Activated naive CD4-positive, alpha-beta T cell treated with anti-CD3 and anti-CD28 coated beads for 36 hours (primary cell): ENCODE measurements at regions of chr10 and their contacts with region 1.

Region 1: GRCh38 chr10:91006001-91006751 is 85.3 kb upstream of the ANKRD1 start:
- DNase-seq: peak; percentile 83
- H3K4me3 Mint-ChIP-seq: no peak overlapping the region
- H3K27ac Mint-ChIP-seq: no peak overlapping the region
- H3K4me1 Mint-ChIP-seq: peaks cover 31% of the 10 kb centered on the region
- H3K27me3 Mint-ChIP-seq: no peaks in the 10 kb centered on the region

Region 2: DNA sequence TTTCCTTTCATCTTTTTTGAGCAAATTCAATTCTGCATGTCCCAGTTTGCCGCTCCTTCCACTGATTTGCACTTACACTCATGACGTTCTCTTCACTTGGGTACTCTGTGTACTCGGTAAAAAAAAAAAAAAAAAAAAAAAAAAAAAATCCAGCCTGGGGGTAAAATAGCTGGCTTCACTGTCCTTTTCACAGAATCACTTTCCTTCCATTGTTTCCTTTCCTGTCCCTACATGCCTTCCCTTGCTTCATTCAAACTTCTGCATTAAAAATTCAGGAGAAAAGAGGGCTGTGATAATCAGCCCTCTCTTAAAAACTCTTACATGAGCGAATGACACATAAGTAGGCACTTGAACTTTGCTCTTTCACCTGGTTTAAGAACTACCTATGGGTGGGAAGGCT is 94.0 kb before region 1 on chr10:
- CTCF ChIA-PET with region 1: interaction called, 24 read pairs
- intact Hi-C with region 1: loop called (anchors 2 kb)
- DNase-seq: no peak
- H3K4me3 Mint-ChIP-seq: no peak overlapping the region
- H3K27ac Mint-ChIP-seq: no peak overlapping the region
- H3K4me1 Mint-ChIP-seq: peaks cover 2% of the 10 kb centered on the region
- H3K27me3 Mint-ChIP-seq: no peaks in the 10 kb centered on the region

Region 3: GRCh38 chr10:91024541-91024940 is 18.4 kb after region 1 on chr10:
- CTCF ChIA-PET with region 1: no interaction called
- intact Hi-C with region 1: no loop called
- DNase-seq: no peak
- H3K4me3 Mint-ChIP-seq: no peak overlapping the region
- H3K27ac Mint-ChIP-seq: no peak overlapping the region
- H3K4me1 Mint-ChIP-seq: peaks cover 2% of the 10 kb centered on the region
- H3K27me3 Mint-ChIP-seq: no peaks in the 10 kb centered on the region

Region 4: DNA sequence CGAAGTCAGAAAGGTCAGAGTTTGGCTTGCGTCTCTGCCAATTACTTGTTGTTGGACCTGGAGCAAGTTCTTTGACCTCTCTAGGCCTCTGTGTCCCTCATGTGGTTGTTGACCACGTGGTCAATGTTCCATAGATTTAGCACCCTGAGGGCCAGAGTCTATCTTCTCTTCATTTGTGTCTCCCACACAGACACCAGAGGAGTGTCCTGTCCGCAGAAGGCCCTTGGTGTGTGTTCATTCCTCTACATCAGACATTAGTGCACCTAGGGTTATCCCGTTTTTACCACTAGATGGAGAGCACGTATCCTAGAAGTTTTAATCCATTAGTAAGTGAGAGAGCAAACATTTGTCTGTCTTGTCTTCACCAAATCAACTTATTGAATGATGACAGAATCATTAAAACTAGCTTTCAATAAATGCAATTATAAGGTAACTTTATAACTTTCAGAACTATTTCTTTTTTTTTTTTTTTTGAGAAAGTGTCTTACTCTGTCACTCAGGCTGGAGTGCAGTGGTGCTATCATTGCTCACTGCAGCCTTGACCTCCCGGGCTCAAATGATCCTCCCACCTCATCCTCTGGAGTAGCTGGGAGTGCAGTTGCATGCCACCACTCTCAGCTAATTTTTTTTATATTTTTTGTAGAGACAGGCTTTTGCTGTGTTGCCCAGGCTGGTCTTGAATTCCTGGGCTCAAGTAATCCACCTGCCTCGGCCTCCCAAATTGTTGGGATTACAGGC is 37.2 kb after region 1 on chr10:
- CTCF ChIA-PET with region 1: interaction called, 11 read pairs
- intact Hi-C with region 1: no loop called
- DNase-seq: no peak
- H3K4me3 Mint-ChIP-seq: no peak overlapping the region
- H3K27ac Mint-ChIP-seq: no peak overlapping the region
- H3K4me1 Mint-ChIP-seq: no peaks in the 10 kb centered on the region
- H3K27me3 Mint-ChIP-seq: peaks cover 4% of the 10 kb centered on the region

Region 5: GRCh38 chr10:91220194-91220953 is 214.2 kb after region 1 on chr10 and contains the start of gene PCGF5:
- CTCF ChIA-PET with region 1: interaction called, 4 read pairs
- intact Hi-C with region 1: loop called (anchors 1 kb)
- DNase-seq: peak; percentile 89
- H3K4me3 Mint-ChIP-seq: peak within 1 kb of the TSS; percentile 80
- H3K27ac Mint-ChIP-seq: peak within 1 kb of the TSS; percentile 22
- H3K4me1 Mint-ChIP-seq: peaks cover 33% of the 10 kb centered on the region
- H3K27me3 Mint-ChIP-seq: no peaks in the 10 kb centered on the region
- total RNA-seq, gene PCGF5: 34.2 to 36.4 TPM

Region 6: DNA sequence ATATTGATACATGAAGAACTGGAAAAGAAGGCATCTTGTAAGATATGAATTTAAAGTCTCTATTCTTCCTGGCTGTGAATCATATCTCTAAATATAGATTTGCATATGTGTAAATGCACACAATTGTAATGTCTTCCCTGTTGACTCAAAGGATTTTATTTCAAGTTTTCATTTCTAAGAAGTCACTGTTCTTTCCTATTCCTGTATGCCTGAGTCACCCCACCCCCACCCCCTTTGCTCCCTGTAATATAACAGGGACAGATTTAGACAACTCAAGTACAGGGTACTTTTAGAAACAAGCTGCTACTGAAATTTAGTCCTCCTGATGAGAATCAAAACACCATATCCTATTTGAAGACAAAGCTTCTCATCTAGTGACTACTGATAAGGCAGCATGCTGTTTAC is 361.0 kb after region 1 on chr10:
- CTCF ChIA-PET with region 1: no interaction called
- intact Hi-C with region 1: loop called (anchors 2 kb)
- DNase-seq: peak; percentile 30
- H3K4me3 Mint-ChIP-seq: no peak overlapping the region
- H3K27ac Mint-ChIP-seq: no peak overlapping the region
- H3K4me1 Mint-ChIP-seq: peaks cover 11% of the 10 kb centered on the region
- H3K27me3 Mint-ChIP-seq: peaks cover 34% of the 10 kb centered on the region

Region 7: GRCh38 chr10:91908337-91909116 is 902.4 kb after region 1 on chr10:
- CTCF ChIA-PET with region 1: no interaction called
- intact Hi-C with region 1: loop called (anchors 10 kb)
- DNase-seq: peak; percentile 77
- H3K4me3 Mint-ChIP-seq: peak overlapping the region; percentile 90
- H3K27ac Mint-ChIP-seq: peak overlapping the region; percentile 74
- H3K4me1 Mint-ChIP-seq: peaks cover 20% of the 10 kb centered on the region
- H3K27me3 Mint-ChIP-seq: peaks cover 7% of the 10 kb centered on the region